Psoas muscle (tissue), 8 donors: ENCODE measurements at regions of chr11 and their contacts with region 1.

Region 1: GRCh38 chr11:66800720-66801428 is 42.4 kb upstream of the RCE1 start:
- DNase-seq: no peak
- ATAC-seq: no peak
- H3K4me3 ChIP-seq: no peak overlapping the region
- H3K27ac ChIP-seq: no peak overlapping the region
- H3K4me1 ChIP-seq: no peaks in the 10 kb centered on the region
- H3K27me3 ChIP-seq: no peaks in the 10 kb centered on the region
- CTCF ChIP-seq: no peak

Region 2: DNA sequence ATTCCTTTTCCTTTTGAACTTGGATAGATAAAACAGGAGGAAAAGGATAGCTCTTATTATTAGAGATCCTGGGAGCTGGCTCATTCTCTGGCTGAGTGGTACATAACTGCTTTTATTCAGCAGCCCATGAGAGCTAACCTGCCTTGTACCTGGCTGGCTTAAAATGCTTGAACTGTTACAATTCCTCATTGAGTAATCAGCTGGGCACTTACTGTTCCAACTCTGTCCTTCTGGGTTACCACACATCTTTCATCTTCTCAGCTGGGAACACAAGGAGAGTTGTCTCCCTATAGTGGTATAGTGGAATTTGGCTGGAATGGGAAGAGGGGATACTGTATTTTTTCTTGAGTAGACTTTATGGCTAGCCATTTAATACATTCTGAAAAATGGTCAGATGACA is 32.1 kb before region 1 on chr11:
- intact Hi-C with region 1: loop called in 1 of 2 experiments (anchors 1 kb)
- DNase-seq: no peak
- ATAC-seq: no peak
- H3K4me3 ChIP-seq: no peak overlapping the region
- H3K27ac ChIP-seq: no peak overlapping the region
- H3K4me1 ChIP-seq: no peaks in the 10 kb centered on the region
- H3K27me3 ChIP-seq: no peaks in the 10 kb centered on the region
- CTCF ChIP-seq: no peak

Region 3: GRCh38 chr11:66842896-66843775 is 42.3 kb after region 1 on chr11 and contains the start of gene RCE1:
- intact Hi-C with region 1: no loop called
- DNase-seq: peak; percentile 90 to 95
- ATAC-seq: peak; percentile 96 to 99 (median 98)
- H3K4me3 ChIP-seq: peak within 1 kb of the TSS; percentile 99
- H3K27ac ChIP-seq: peak within 1 kb of the TSS; percentile 98
- H3K4me1 ChIP-seq: peaks cover 22% of the 10 kb centered on the region
- H3K27me3 ChIP-seq: no peaks in the 10 kb centered on the region
- CTCF ChIP-seq: no peak
- total RNA-seq, gene RCE1: 3.1 to 5.0 (median 4.3) TPM

Region 4: GRCh38 chr11:66937334-66937733 is 136.5 kb after region 1 on chr11:
- intact Hi-C with region 1: no loop called
- DNase-seq: no peak
- ATAC-seq: no peak
- H3K4me3 ChIP-seq: no peak overlapping the region
- H3K27ac ChIP-seq: no peak overlapping the region
- H3K4me1 ChIP-seq: no peaks in the 10 kb centered on the region
- H3K27me3 ChIP-seq: no peaks in the 10 kb centered on the region
- CTCF ChIP-seq: no peak